PC-9 (cell line): ENCODE measurements at regions of chr2 and their contacts with region 1.

Region 1: GRCh38 chr2:137964066-137964858 is at the start of gene HNMT:
- DNase-seq: peak; percentile 41 to 95
- H3K4me3 ChIP-seq: peak within 1 kb of the TSS; percentile 59
- H3K27ac ChIP-seq: peak within 1 kb of the TSS; percentile 85
- H3K4me1 ChIP-seq: peaks cover 45% of the 10 kb centered on the region
- H3K27me3 ChIP-seq: no peaks in the 10 kb centered on the region
- CTCF ChIP-seq: no peak
- total RNA-seq, gene HNMT: 16.6 TPM in 2 replicates

Region 2: GRCh38 chr2:137607722-137608318 is 356.4 kb before region 1 on chr2:
- CTCF ChIA-PET with region 1: no interaction called
- POLR2A ChIA-PET with region 1: no interaction called
- intact Hi-C with region 1: no loop called
- DNase-seq: no peak
- H3K4me3 ChIP-seq: no peak overlapping the region
- H3K27ac ChIP-seq: no peak overlapping the region
- H3K4me1 ChIP-seq: no peaks in the 10 kb centered on the region
- H3K27me3 ChIP-seq: no peaks in the 10 kb centered on the region
- CTCF ChIP-seq: no peak

Region 3: DNA sequence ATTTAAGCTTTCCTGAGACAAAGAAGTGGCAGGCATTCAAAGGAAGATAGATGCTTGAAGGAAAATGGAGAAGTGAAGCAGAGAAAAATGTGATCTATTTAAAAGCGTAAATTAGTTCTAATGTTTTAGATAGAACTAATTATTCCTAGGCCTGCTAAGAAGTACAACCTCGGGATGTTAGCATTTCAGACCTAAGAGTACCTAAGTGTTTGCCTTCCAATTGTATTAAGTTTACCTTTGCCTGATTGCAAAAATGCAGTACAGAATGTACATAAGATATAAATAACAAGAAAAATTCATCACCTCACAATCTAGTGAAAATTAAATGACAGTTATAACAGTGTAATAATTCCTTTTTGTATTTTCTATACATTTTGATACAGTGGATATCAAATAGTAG is 71.1 kb before region 1 on chr2:
- CTCF ChIA-PET with region 1: no interaction called
- POLR2A ChIA-PET with region 1: no interaction called
- intact Hi-C with region 1: no loop called
- DNase-seq: no peak
- H3K4me3 ChIP-seq: no peak overlapping the region
- H3K27ac ChIP-seq: no peak overlapping the region
- H3K4me1 ChIP-seq: no peaks in the 10 kb centered on the region
- H3K27me3 ChIP-seq: no peaks in the 10 kb centered on the region
- CTCF ChIP-seq: no peak

Region 4: GRCh38 chr2:137928547-137929518 is 35.4 kb before region 1 on chr2:
- CTCF ChIA-PET with region 1: interaction called, 7 read pairs
- POLR2A ChIA-PET with region 1: no interaction called
- intact Hi-C with region 1: loop called (anchors 5 kb)
- DNase-seq: peak; percentile 21 to 77
- H3K4me3 ChIP-seq: no peak overlapping the region
- H3K27ac ChIP-seq: no peak overlapping the region
- H3K4me1 ChIP-seq: peaks cover 12% of the 10 kb centered on the region; the same call in 1 of the 2 replicates
- H3K27me3 ChIP-seq: no peaks in the 10 kb centered on the region
- CTCF ChIP-seq: no peak

Region 5: DNA sequence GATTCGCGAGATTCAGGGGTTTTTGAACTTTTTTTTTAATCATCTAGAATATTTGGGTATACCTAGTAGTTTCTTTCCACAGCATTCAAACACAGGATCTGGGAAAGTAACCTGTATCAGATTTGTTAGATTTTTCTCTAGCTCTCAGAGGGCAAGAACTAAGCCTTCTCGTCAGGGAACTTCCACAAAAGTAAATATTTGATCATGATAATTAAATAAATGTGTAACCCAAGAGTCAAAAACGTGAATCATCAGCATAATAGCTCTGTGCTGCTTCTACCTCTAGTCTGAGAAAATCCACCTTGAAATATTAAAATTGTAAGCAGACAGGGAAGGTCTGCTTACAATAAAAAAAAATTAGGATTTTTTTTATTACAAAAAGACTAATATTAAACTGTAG is 311.6 kb after region 1 on chr2:
- CTCF ChIA-PET with region 1: no interaction called
- POLR2A ChIA-PET with region 1: no interaction called
- intact Hi-C with region 1: no loop called
- DNase-seq: peak in 1 of 2 experiments; percentile 75
- H3K4me3 ChIP-seq: no peak overlapping the region
- H3K27ac ChIP-seq: peak overlapping the region; percentile 27; the same call in 1 of the 2 replicates
- H3K4me1 ChIP-seq: peaks cover 24% of the 10 kb centered on the region
- H3K27me3 ChIP-seq: no peaks in the 10 kb centered on the region
- CTCF ChIP-seq: no peak

Region 6: GRCh38 chr2:139674577-139674976 is 1710.3 kb after region 1 on chr2:
- CTCF ChIA-PET with region 1: no interaction called
- POLR2A ChIA-PET with region 1: no interaction called
- intact Hi-C with region 1: no loop called
- DNase-seq: no peak
- H3K4me3 ChIP-seq: no peak overlapping the region
- H3K27ac ChIP-seq: no peak overlapping the region
- H3K4me1 ChIP-seq: no peaks in the 10 kb centered on the region
- H3K27me3 ChIP-seq: no peaks in the 10 kb centered on the region
- CTCF ChIP-seq: no peak